Heart left ventricle (tissue), 16 donors: ENCODE measurements at regions of chr4 and their contacts with region 1.

Region 1: DNA sequence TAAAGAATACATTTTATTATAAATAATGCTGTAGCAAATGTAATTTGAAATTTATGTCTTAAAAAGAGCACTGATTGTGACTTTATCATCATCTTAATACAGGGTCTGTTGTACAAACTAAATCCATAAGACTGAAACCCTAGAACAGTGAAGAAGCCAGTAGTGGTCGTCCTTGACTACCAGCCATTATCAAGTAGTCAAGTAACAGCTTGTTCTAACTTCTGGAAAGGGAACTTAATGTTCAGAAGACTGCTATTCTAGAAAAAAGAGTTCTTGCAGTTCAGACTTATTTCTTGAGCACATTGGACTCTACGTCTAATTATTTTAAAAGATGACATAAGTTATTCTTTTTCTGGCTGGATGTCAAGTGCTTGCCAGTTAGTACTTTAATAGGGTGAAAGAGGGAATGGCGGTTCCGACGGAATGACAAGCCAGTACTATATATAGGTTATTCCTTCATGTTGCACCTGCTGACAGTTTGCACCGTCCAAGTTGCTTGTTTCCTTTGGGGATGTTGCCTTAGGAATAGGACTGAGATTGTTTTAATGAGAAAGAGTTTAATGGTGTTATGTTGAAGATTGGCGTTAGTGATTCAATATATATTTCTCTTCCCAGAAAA is 109.9 kb downstream of the RAPGEF2 start:
- DNase-seq: peak in 4 of 5 donors; percentile 38 to 54 (median 53)
- ATAC-seq: peak; percentile 90 to 92 (median 92)
- H3K4me3 ChIP-seq: peak overlapping the region in 1 of 12 donors; percentile 1
- H3K27ac ChIP-seq: peak overlapping the region; percentile 9 to 75 (median 68)
- H3K4me1 ChIP-seq: peaks cover 3 to 82% (median 45%) of the 10 kb centered on the region in 12 donors
- H3K27me3 ChIP-seq: no peaks in the 10 kb centered on the region
- CTCF ChIP-seq: no peak
- POLR2A ChIP-seq: no peak

Region 2: DNA sequence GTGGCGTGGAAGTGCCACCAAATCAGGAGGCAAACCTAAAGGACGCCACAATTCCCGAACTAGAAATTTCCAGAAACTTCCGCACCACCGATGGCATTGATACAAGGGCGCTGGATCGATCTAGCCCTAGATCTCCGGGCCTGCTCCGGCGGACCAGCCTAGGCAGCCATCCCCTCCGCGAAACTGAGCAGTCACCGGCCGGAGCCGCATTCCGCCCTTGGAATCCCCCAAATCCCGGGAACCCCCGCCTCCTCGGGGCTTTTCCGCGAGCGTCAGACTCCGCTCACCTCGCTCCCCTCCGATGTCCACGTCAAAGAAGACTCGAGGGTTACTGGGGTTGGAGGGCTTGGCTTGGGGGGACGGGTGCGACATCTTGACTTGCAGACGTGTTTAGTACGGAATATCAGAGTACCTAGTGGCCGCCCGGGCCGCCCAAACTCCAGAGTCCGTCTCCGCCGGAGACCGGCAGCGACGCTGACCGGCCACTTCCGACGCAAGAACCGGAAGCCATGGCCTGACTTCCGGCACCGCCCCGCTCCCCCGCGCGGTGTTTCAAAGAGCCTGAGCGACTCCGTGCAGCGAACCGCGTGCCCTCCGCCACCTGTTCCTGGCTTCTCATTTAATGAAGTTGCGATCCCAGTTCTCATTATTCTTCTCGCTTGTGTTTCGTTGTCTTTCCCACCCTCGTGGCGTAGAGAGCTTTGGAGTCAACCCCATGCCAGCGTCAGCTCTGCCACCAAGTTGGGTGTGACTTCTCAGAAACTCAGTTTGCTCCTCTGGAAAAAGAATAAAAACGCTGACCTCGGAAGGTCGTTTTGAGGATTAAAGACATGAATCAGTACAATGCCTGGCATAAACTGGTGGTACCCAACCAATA is 489.6 kb before region 1 on chr4 and contains the start of gene PPID:
- intact Hi-C with region 1: loop called in 4 of 10 experiments (anchors 10 kb)
- DNase-seq: peak; percentile 86 to 92 (median 89)
- ATAC-seq: peak; percentile 91 to 98 (median 98)
- H3K4me3 ChIP-seq: peak within 1 kb of the TSS; percentile 70 to 95 (median 85)
- H3K27ac ChIP-seq: peak within 1 kb of the TSS; percentile 76 to 96 (median 94)
- H3K4me1 ChIP-seq: peaks cover 0 to 18% (median 12%) of the 10 kb centered on the region in 12 donors
- H3K27me3 ChIP-seq: no peaks in the 10 kb centered on the region
- CTCF ChIP-seq: no peak
- POLR2A ChIP-seq: peak in 1 of 2 donors; percentile 70
- total RNA-seq, gene PPID: 24.1 to 43.4 (median 30.7) TPM

Region 3: GRCh38 chr4:159150821-159151390 is 61.9 kb before region 1 on chr4:
- intact Hi-C with region 1: no loop called
- DNase-seq: no peak
- ATAC-seq: peak in 1 of 4 donors; percentile 28
- H3K4me3 ChIP-seq: no peak overlapping the region
- H3K27ac ChIP-seq: no peak overlapping the region
- H3K4me1 ChIP-seq: peaks cover 0 to 86% (median 49%) of the 10 kb centered on the region in 12 donors
- H3K27me3 ChIP-seq: no peaks in the 10 kb centered on the region
- CTCF ChIP-seq: no peak
- POLR2A ChIP-seq: no peak

Region 4: DNA sequence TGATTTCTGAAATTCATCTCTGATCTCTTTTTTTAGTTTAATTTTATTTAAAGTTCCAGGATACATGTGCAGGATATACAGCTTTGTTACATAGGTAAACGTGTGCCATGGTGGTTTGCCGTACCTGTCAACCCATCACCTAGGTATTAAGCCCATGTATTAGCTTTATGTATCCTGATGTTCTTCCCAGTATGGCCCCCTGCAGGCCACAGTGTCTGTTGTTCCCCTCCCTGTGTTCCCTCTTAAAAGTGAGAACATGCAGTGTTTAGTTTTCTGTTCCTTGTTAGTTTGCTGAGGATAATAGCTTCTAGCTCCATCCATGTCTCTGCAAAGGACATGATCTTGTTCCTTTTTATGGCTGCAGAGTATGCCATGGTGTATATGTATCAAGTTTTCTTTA is 43.3 kb after region 1 on chr4:
- intact Hi-C with region 1: no loop called
- DNase-seq: no peak
- ATAC-seq: no peak
- H3K4me3 ChIP-seq: no peak overlapping the region
- H3K27ac ChIP-seq: no peak overlapping the region
- H3K4me1 ChIP-seq: peaks cover 0 to 46% (median 22%) of the 10 kb centered on the region in 12 donors
- H3K27me3 ChIP-seq: no peaks in the 10 kb centered on the region
- CTCF ChIP-seq: no peak
- POLR2A ChIP-seq: no peak

Region 5: DNA sequence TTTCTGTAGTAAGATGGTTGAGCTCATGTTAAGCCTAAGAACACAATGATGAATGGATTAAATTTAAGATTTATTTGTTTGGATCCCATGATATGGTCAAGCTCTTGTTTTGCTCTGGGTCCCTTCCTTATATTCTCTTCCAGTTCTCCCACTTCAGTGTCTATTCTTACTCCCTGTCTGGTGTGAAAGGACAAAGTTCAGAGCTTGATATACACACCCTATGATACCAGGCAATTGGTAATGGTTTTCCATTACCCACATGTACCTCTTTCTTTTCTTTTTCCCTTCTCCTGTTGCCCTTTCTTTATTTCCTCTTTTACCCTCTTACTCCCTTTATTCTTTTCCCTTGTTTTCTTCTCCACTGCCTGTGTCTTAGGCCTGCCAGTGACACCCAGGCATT is 113.7 kb after region 1 on chr4:
- intact Hi-C with region 1: loop called in 1 of 10 experiments (anchors 10 kb)
- DNase-seq: no peak
- ATAC-seq: no peak
- H3K4me3 ChIP-seq: no peak overlapping the region
- H3K27ac ChIP-seq: no peak overlapping the region
- H3K4me1 ChIP-seq: peaks cover 0 to 10% (median 3%) of the 10 kb centered on the region in 12 donors
- H3K27me3 ChIP-seq: no peaks in the 10 kb centered on the region
- CTCF ChIP-seq: no peak
- POLR2A ChIP-seq: no peak